Common myeloid progenitor, CD34-positive (primary cell): ENCODE measurements at regions of chr15 and their contacts with region 1.

Region 1: DNA sequence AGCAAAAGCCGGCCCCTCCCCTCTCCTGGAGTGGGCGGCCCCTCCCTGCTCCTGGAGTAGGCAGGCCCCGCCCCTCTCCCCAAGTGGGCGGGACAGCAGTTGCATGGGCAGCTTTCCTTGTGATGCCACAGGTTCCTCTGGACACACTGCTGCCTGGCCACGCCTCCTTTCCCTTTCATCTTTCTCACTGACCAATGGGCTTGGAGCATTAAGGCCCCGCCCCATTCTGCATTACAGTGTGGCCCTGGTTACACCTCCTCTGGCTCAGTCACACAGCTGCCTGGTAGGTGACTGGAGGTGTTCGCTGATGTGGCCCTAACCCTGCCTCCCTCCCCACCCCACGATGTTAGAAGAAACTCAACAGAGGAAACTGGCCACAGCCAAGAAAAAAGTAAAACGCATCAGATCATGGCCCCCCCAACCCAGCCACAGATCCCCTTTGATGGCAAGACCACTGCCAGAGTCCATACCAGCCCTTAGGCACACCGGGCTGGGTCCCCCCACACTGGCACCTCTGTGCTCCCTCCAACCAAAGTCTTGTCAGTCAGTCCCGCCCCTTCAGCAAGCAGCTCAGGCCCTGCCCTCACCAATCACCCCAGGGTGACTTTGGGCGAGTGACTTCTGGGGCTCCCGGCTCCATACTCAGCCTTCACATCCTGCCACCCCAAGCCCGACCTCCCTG is 84.3 kb downstream of the ADAMTS7 start:
- DNase-seq: peak; percentile 17 to 47 (median 36)
- H3K4me3 ChIP-seq: no peak overlapping the region
- H3K27ac ChIP-seq: no peak overlapping the region
- H3K4me1 ChIP-seq: peaks cover 0 to 9% (median 0%) of the 10 kb centered on the region in 4 experiments
- H3K27me3 ChIP-seq: no peaks in the 10 kb centered on the region

Region 2: DNA sequence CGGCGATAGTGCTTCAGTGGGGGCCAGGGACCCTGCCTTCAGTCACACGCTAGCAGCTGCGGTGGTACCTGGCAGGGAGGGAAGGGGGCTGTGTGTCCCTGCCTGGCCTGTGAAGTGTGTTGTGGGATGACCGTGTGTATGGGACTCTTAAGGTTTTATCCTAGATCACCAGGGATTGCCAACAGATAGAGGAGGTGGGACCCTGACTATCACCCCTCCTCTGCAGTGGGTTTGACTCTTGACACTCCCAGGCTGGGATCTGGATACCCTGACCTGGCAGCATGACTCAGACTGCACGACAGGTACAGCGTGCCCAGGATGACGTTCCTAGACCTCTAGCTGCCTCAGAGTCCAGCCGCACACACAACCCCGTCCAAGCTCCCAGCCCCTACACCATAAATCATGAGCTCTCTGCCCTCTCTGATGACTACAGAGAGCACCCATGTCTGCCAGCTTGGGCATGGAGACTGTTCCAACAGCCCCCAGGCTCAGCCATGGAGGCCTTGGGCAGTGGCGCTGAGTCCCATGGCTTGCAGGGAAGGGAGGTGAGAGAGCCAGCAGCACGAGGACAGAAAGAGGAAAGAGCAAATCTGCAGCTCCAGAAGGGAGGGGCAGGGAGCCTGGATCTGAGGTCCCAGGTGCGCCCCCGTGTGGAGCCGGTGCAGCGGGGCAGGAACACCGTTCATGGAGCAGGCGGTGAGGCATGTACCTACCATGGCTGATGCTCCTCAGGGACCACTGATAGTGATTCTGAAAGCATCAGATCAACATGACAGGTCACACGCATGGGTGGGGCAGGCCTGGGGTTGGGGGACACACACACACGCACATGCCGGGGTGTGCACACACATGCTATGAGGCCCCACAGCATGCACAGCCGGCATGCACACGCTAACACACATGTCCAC is 13.2 kb after region 1 on chr15:
- CTCF ChIA-PET with region 1: interaction called, 13 read pairs
- POLR2A ChIA-PET with region 1: interaction called, 3 read pairs
- DNase-seq: peak; percentile 78 to 85 (median 84)
- H3K4me3 ChIP-seq: no peak overlapping the region
- H3K27ac ChIP-seq: no peak overlapping the region
- H3K4me1 ChIP-seq: peaks cover 0 to 4% (median 3%) of the 10 kb centered on the region in 4 experiments
- H3K27me3 ChIP-seq: no peaks in the 10 kb centered on the region